Activated CD4-positive, alpha-beta memory T cell treated with anti-CD3 and anti-CD28 coated beads for 36 hours (primary cell): ENCODE measurements at regions of chr5 and their contacts with region 1.

Region 1: DNA sequence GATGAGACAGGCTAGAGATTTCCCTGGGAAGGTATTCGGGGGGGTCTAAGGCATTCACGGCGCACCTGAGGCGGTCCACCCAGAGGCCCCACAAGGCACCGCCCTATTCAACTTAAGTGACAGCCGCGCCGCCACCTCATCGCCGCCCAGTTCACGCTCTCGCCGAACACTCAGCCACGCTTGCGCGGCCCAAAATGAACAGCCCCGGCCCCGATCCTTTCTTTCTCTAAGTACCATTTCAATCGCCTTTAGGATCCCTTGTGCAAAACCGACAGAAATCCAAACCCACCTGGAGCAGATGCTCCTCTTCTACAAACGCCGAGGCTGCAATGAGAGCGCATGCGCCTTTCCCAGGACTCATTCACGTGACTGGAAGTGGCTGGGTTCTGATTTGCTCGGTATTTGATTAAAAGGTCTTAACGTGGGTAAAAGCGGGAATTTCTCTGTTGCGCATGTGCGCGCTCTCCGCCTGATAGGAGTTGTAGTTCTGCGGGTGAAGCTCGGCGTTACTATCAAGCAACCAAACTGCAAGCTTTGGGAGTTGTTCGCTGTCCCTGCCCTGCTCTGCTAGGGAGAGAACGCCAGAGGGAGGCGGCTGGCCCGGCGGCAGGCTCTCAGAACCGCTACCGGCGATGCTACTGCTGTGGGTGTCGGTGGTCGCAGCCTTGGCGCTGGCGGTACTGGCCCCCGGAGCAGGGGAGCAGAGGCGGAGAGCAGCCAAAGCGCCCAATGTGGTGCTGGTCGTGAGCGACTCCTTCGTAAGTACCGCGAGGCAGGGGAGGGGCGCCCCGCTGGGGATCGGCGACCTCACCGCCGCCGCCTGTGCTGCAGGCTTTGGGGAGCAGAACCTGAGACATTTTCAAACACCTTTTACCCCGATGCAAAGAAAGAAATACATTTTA is at the starts of genes ARSK and SKIC3:
- DNase-seq: peak; percentile 95
- H3K4me3 Mint-ChIP-seq: peak within 1 kb of the TSS; percentile 89
- H3K27ac Mint-ChIP-seq: peak within 1 kb of the TSS; percentile 92
- H3K4me1 Mint-ChIP-seq: peaks cover 42% of the 10 kb centered on the region
- H3K27me3 Mint-ChIP-seq: no peaks in the 10 kb centered on the region
- total RNA-seq, gene ARSK: 4.5 to 4.6 TPM
- total RNA-seq, gene SKIC3: 74.7 to 78.1 TPM

Region 2: DNA sequence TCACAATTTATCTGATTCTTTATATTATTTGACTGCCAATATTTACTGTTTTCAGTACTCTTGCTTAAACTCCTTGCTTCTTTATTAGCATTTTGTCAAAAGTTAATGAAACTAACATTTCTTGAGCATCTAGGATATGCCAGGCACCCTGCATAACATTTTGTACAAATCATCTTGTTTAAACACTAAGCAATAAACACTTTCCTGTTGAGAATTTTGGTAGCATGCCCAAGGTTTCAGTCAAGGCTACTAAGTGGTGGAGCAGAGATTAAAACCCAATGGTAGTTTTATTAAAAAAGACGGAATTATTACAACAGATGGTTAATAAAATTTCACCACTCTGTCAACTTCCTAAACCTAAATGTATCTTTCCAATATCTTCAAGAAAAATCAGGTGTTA is 43.3 kb before region 1 on chr5:
- CTCF ChIA-PET with region 1: no interaction called
- POLR2A ChIA-PET with region 1: no interaction called
- intact Hi-C with region 1: no loop called
- DNase-seq: no peak
- H3K4me3 Mint-ChIP-seq: no peak overlapping the region
- H3K27ac Mint-ChIP-seq: no peak overlapping the region
- H3K4me1 Mint-ChIP-seq: no peaks in the 10 kb centered on the region
- H3K27me3 Mint-ChIP-seq: no peaks in the 10 kb centered on the region

Region 3: GRCh38 chr5:95591490-95591901 is 36.6 kb after region 1 on chr5:
- CTCF ChIA-PET with region 1: no interaction called
- POLR2A ChIA-PET with region 1: interaction called, 3 read pairs
- intact Hi-C with region 1: loop called (anchors 1 kb)
- DNase-seq: no peak
- H3K4me3 Mint-ChIP-seq: no peak overlapping the region
- H3K27ac Mint-ChIP-seq: no peak overlapping the region
- H3K4me1 Mint-ChIP-seq: peaks cover 30% of the 10 kb centered on the region
- H3K27me3 Mint-ChIP-seq: no peaks in the 10 kb centered on the region

Region 4: DNA sequence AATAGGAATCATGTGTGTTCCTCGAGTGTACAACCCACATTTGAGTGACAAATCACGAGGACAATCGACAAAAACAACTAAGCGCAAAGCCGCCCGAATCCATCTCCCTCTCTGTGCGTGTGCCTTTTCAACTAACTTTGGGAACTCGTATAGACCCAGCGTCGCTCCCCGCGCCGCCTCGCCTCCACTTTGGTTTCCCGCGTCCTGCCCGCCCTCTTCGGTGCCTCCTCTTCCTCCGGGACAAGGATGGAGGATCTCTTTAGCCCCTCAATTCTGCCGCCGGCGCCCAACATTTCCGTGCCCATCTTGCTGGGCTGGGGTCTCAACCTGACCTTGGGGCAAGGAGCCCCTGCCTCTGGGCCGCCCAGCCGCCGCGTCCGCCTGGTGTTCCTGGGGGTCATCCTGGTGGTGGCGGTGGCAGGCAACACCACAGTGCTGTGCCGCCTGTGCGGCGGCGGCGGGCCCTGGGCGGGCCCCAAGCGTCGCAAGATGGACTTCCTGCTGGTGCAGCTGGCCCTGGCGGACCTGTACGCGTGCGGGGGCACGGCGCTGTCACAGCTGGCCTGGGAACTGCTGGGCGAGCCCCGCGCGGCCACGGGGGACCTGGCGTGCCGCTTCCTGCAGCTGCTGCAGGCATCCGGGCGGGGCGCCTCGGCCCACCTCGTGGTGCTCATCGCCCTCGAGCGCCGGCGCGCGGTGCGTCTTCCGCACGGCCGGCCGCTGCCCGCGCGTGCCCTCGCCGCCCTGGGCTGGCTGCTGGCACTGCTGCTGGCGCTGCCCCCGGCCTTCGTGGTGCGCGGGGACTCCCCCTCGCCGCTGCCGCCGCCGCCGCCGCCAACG is 65.4 kb after region 1 on chr5 and contains the start of gene GPR150:
- CTCF ChIA-PET with region 1: interaction called, 5 read pairs
- POLR2A ChIA-PET with region 1: no interaction called
- intact Hi-C with region 1: loop called (anchors 1 kb)
- DNase-seq: peak; percentile 78
- H3K4me3 Mint-ChIP-seq: peak within 1 kb of the TSS; percentile 80
- H3K27ac Mint-ChIP-seq: peak within 1 kb of the TSS; percentile 66
- H3K4me1 Mint-ChIP-seq: peaks cover 55% of the 10 kb centered on the region
- H3K27me3 Mint-ChIP-seq: no peaks in the 10 kb centered on the region
- total RNA-seq, gene GPR150: 0.50 to 0.82 TPM

Region 5: GRCh38 chr5:95631991-95632675 is 77.2 kb after region 1 on chr5:
- CTCF ChIA-PET with region 1: no interaction called
- POLR2A ChIA-PET with region 1: interaction called, 5 read pairs
- intact Hi-C with region 1: loop called (anchors 1 kb)
- DNase-seq: peak; percentile 86
- H3K4me3 Mint-ChIP-seq: peak overlapping the region; percentile 51
- H3K27ac Mint-ChIP-seq: peak overlapping the region; percentile 91
- H3K4me1 Mint-ChIP-seq: peaks cover 22% of the 10 kb centered on the region
- H3K27me3 Mint-ChIP-seq: no peaks in the 10 kb centered on the region

Region 6: GRCh38 chr5:95718203-95718602 is 163.3 kb after region 1 on chr5:
- CTCF ChIA-PET with region 1: no interaction called
- POLR2A ChIA-PET with region 1: no interaction called
- intact Hi-C with region 1: loop called (anchors 10 kb)
- DNase-seq: peak; percentile 35
- H3K4me3 Mint-ChIP-seq: no peak overlapping the region
- H3K27ac Mint-ChIP-seq: no peak overlapping the region
- H3K4me1 Mint-ChIP-seq: peaks cover 16% of the 10 kb centered on the region
- H3K27me3 Mint-ChIP-seq: peaks cover 7% of the 10 kb centered on the region

Region 7: GRCh38 chr5:95822542-95823181 is 267.8 kb after region 1 on chr5 and contains the start of gene GLRX:
- CTCF ChIA-PET with region 1: no interaction called
- POLR2A ChIA-PET with region 1: no interaction called
- intact Hi-C with region 1: loop called (anchors 5 kb)
- DNase-seq: peak; percentile 61
- H3K4me3 Mint-ChIP-seq: peak within 1 kb of the TSS; percentile 94
- H3K27ac Mint-ChIP-seq: peak within 1 kb of the TSS; percentile 90
- H3K4me1 Mint-ChIP-seq: peaks cover 65% of the 10 kb centered on the region
- H3K27me3 Mint-ChIP-seq: no peaks in the 10 kb centered on the region
- total RNA-seq, gene GLRX: 33.2 to 34.0 TPM

Region 8: GRCh38 chr5:97183100-97183929 is 1628.4 kb after region 1 on chr5 and contains the start of gene RIOK2:
- CTCF ChIA-PET with region 1: no interaction called
- POLR2A ChIA-PET with region 1: no interaction called
- intact Hi-C with region 1: loop called (anchors 1 kb)
- DNase-seq: peak; percentile 96
- H3K4me3 Mint-ChIP-seq: peak within 1 kb of the TSS; percentile 87
- H3K27ac Mint-ChIP-seq: peak within 1 kb of the TSS; percentile 98
- H3K4me1 Mint-ChIP-seq: peaks cover 34% of the 10 kb centered on the region
- H3K27me3 Mint-ChIP-seq: no peaks in the 10 kb centered on the region
- total RNA-seq, gene RIOK2: 31.8 to 41.5 TPM